CD4-positive, alpha-beta memory T cell (primary cell): ENCODE measurements at regions of chr5 and their contacts with region 1.

Region 1: DNA sequence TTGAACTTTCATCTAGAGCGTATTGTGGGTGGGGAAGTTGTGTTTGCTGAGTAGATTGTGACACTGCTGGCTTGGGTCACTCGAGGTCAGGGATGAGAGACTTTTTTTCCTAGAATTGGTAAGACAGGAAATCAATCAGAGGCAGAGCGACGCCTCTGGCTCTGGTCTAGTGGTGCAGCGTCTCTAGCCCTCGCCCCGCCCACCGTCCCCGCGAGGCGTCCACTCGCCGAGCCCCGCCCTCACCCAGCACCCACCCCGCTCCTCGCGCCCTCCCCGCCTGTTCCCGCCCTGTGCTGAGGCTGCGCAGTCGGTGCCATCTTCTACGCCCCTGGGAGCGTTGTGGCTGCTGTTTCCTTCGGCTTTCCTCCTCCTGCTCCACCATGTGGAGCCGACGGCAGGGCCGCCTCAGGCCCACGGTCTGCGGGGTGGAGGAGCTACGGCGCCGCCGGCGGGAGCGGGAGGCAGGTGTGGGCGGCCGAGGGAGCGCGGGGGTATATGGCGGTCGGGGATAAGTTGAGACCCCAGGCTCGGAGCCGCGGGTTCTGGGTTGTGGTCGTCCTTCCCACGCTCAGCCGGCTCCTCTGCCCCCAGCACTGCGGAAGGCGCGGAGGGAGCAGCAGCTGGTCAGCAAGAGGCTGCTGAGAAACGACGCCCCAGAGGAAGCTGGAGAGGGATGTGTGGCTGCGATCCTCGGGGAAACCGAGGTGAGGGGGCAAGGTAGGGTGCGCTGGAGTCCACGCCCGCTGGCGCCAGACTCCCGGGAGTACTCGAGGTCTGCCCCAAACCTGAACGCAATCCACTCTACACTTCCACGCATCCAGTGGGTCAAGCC is at the start of gene TMCO6:
- DNase-seq: peak; percentile 92 to 95 (median 95)
- H3K4me3 ChIP-seq: peak within 1 kb of the TSS; percentile 71 to 84
- H3K4me3 Mint-ChIP-seq: peak within 1 kb of the TSS; percentile 90 to 98 (median 93)
- H3K27ac ChIP-seq: peak within 1 kb of the TSS; percentile 69
- H3K27ac Mint-ChIP-seq: peak within 1 kb of the TSS; percentile 90 to 99 (median 96)
- H3K4me1 ChIP-seq: peaks cover 22% of the 10 kb centered on the region
- H3K4me1 Mint-ChIP-seq: peaks cover 21 to 50% (median 34%) of the 10 kb centered on the region in 4 donors
- H3K27me3 ChIP-seq: no peaks in the 10 kb centered on the region
- H3K27me3 Mint-ChIP-seq: no peaks in the 10 kb centered on the region
- total RNA-seq, gene TMCO6: 50.0 to 56.3 TPM

Region 2: GRCh38 chr5:139844472-139845145 is 794.8 kb before region 1 on chr5:
- CTCF ChIA-PET with region 1: no interaction called
- POLR2A ChIA-PET with region 1: no interaction called
- intact Hi-C with region 1: loop called (anchors 5 kb)
- DNase-seq: peak; percentile 52 to 69 (median 54)
- H3K4me3 ChIP-seq: no peak overlapping the region
- H3K4me3 Mint-ChIP-seq: peak overlapping the region in 2 of 8 donors; percentile 44 to 78
- H3K27ac ChIP-seq: no peak overlapping the region
- H3K27ac Mint-ChIP-seq: peak overlapping the region in 3 of 7 donors; percentile 16 to 88 (median 20)
- H3K4me1 ChIP-seq: peaks cover 8% of the 10 kb centered on the region
- H3K4me1 Mint-ChIP-seq: peaks cover 4 to 20% (median 12%) of the 10 kb centered on the region in 4 donors
- H3K27me3 ChIP-seq: peaks cover 9% of the 10 kb centered on the region
- H3K27me3 Mint-ChIP-seq: peaks cover 5 to 20% of the 10 kb centered on the region in 2 donors

Region 3: GRCh38 chr5:140547508-140548299 is 91.7 kb before region 1 on chr5 and contains the start of gene EIF4EBP3:
- CTCF ChIA-PET with region 1: interaction called, 49 read pairs
- POLR2A ChIA-PET with region 1: interaction called, 74 read pairs
- intact Hi-C with region 1: loop called (anchors 1 kb)
- DNase-seq: peak; percentile 84 to 92 (median 87)
- H3K4me3 ChIP-seq: peak within 1 kb of the TSS; percentile 57 to 76
- H3K4me3 Mint-ChIP-seq: peak within 1 kb of the TSS; percentile 85 to 93 (median 89)
- H3K27ac ChIP-seq: peak within 1 kb of the TSS; percentile 77
- H3K27ac Mint-ChIP-seq: peak within 1 kb of the TSS; percentile 91 to 97 (median 97)
- H3K4me1 ChIP-seq: peaks cover 30% of the 10 kb centered on the region
- H3K4me1 Mint-ChIP-seq: peaks cover 19 to 50% (median 26%) of the 10 kb centered on the region in 4 donors
- H3K27me3 ChIP-seq: no peaks in the 10 kb centered on the region
- H3K27me3 Mint-ChIP-seq: no peaks in the 10 kb centered on the region
- total RNA-seq, gene EIF4EBP3: 15.3 to 18.8 TPM

Region 4: DNA sequence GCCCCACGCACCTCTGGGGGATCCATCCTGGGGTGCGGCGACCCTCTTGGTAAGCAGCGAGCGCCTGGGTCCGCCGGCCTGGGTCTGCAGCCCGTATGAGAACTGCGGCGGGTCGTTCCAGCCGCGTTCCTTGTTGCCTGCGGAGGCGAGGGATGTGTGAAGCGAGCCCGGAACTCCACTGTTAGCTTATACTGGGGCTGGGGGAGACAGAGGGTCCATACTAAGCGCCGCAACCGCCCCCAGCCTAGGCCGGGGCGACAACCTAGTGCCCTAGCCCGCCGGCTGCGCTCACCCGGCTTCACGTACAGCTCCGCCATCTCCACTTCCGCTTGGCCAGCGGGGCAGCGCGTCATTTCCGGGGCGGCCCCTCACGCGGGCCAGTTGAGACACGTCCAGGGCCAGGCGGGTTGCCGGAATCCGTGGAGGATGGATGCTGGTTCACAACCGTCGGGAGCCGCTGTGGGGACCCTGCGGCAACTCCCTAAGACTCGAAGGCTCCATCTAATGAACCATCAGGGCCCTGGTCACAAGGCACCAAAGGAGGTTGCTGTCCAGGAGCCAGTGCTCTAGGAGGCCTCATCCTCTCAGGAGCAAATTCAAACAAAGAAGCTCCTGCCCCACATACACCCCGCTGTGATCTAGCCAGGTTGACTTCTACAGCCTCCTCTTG is 82.1 kb before region 1 on chr5 and contains the start of gene SRA1:
- CTCF ChIA-PET with region 1: interaction called, 5 read pairs
- POLR2A ChIA-PET with region 1: interaction called, 4 read pairs
- intact Hi-C with region 1: loop called (anchors 2 kb)
- DNase-seq: peak; percentile 75 to 86 (median 77)
- H3K4me3 ChIP-seq: peak within 1 kb of the TSS; percentile 60 to 81
- H3K4me3 Mint-ChIP-seq: peak within 1 kb of the TSS; percentile 82 to 92 (median 92)
- H3K27ac ChIP-seq: peak within 1 kb of the TSS; percentile 92
- H3K27ac Mint-ChIP-seq: peak within 1 kb of the TSS; percentile 73 to 98 (median 97)
- H3K4me1 ChIP-seq: peaks cover 41% of the 10 kb centered on the region
- H3K4me1 Mint-ChIP-seq: peaks cover 33 to 55% (median 43%) of the 10 kb centered on the region in 4 donors
- H3K27me3 ChIP-seq: no peaks in the 10 kb centered on the region
- H3K27me3 Mint-ChIP-seq: no peaks in the 10 kb centered on the region
- total RNA-seq, gene SRA1: 24.5 to 26.6 TPM

Region 5: GRCh38 chr5:140664359-140665119 is 25.2 kb after region 1 on chr5 and contains the start of gene WDR55:
- CTCF ChIA-PET with region 1: no interaction called
- POLR2A ChIA-PET with region 1: interaction called, 74 read pairs
- intact Hi-C with region 1: loop called (anchors 2 kb)
- DNase-seq: peak; percentile 94 to 99 (median 94)
- H3K4me3 ChIP-seq: peak within 1 kb of the TSS; percentile 90 to 98
- H3K4me3 Mint-ChIP-seq: peak within 1 kb of the TSS; percentile 96 to 99 (median 98)
- H3K27ac ChIP-seq: peak within 1 kb of the TSS; percentile 95
- H3K27ac Mint-ChIP-seq: peak within 1 kb of the TSS; percentile 98 to 99 (median 99)
- H3K4me1 ChIP-seq: peaks cover 20% of the 10 kb centered on the region
- H3K4me1 Mint-ChIP-seq: peaks cover 27 to 52% (median 34%) of the 10 kb centered on the region in 4 donors
- H3K27me3 ChIP-seq: no peaks in the 10 kb centered on the region
- H3K27me3 Mint-ChIP-seq: no peaks in the 10 kb centered on the region
- total RNA-seq, gene WDR55: 47.1 to 49.6 TPM

Region 6: GRCh38 chr5:140700177-140701144 is 61.1 kb after region 1 on chr5 and contains the start of gene ZMAT2:
- CTCF ChIA-PET with region 1: interaction called, 4 read pairs
- POLR2A ChIA-PET with region 1: interaction called, 3 read pairs
- intact Hi-C with region 1: loop called (anchors 1 kb)
- DNase-seq: peak; percentile 89 to 98 (median 94)
- H3K4me3 ChIP-seq: peak within 1 kb of the TSS; percentile 48 to 91
- H3K4me3 Mint-ChIP-seq: peak within 1 kb of the TSS; percentile 95 to 99 (median 98)
- H3K27ac ChIP-seq: peak within 1 kb of the TSS; percentile 80
- H3K27ac Mint-ChIP-seq: peak within 1 kb of the TSS; percentile 91 to 99 (median 98)
- H3K4me1 ChIP-seq: peaks cover 18% of the 10 kb centered on the region
- H3K4me1 Mint-ChIP-seq: peaks cover 17 to 31% (median 23%) of the 10 kb centered on the region in 4 donors
- H3K27me3 ChIP-seq: no peaks in the 10 kb centered on the region
- H3K27me3 Mint-ChIP-seq: no peaks in the 10 kb centered on the region
- total RNA-seq, gene ZMAT2: 56.3 to 57.4 TPM

Region 7: DNA sequence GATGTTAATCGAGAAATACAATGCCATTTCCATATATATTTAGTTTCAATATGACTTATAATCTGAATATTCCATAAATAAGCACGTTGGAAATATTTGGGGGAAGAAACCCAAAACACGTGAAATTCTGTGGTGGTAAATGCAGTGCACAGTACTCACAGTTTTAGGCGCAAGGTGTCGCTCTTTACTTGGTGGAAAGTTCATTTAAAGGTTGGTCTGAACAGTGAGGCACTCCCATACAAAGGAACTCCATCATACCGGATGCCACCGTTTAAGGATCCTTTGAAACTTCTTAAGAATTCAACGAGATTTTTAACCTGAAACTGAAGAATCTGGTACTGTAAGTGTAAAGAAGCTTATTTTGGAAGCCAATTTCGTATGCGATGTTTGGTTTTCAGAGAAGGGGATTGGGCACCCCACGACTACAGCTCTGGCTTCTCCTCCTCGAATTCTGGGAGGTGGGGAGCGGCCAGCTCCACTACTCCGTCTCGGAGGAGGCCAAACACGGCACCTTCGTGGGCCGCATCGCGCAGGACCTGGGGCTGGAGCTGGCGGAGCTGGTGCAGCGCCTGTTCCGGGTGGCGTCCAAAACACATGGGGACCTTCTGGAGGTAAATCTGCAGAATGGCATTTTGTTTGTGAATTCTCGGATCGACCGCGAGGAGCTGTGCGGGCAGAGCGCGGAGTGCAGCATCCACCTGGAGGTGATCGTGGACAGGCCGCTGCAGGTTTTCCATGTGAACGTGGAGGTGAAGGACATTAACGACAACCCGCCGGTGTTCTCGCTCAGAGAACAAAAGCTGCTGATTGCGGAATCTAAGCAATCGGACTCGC is 229.6 kb after region 1 on chr5 and contains the start of gene PCDHA11:
- CTCF ChIA-PET with region 1: no interaction called
- POLR2A ChIA-PET with region 1: no interaction called
- intact Hi-C with region 1: no loop called
- DNase-seq: no peak
- H3K4me3 ChIP-seq: no peak within 1 kb of the TSS
- H3K4me3 Mint-ChIP-seq: peak within 1 kb of the TSS in 2 of 8 donors; percentile 5 to 13
- H3K27ac ChIP-seq: no peak within 1 kb of the TSS
- H3K27ac Mint-ChIP-seq: no peak within 1 kb of the TSS
- H3K4me1 ChIP-seq: no peaks in the 10 kb centered on the region
- H3K4me1 Mint-ChIP-seq: peaks cover 0 to 3% (median 0%) of the 10 kb centered on the region in 4 donors
- H3K27me3 ChIP-seq: no peaks in the 10 kb centered on the region
- H3K27me3 Mint-ChIP-seq: peaks cover 8 to 13% of the 10 kb centered on the region in 2 donors
- total RNA-seq, gene PCDHA11: not detected